ENCODE measurements at regions of chr6 and their contacts with region 1.

Region 1: GRCh38 chr6:144482142-144482541 is 197.0 kb downstream of the UTRN start:
- DNase-seq: peak; percentile 84 to 86
- H3K4me3 ChIP-seq: no peak overlapping the region
- H3K27ac ChIP-seq: peak overlapping the region; percentile 26 to 54 (median 32)
- H3K4me1 ChIP-seq: peaks cover 37 to 47% of the 10 kb centered on the region in 2 donors
- H3K27me3 ChIP-seq: no peaks in the 10 kb centered on the region
- CTCF ChIP-seq: peak; percentile 12 to 70 (median 62)
- POLR2A ChIP-seq: no peak

Region 2: GRCh38 chr6:144104898-144105487 is 377.1 kb before region 1 on chr6:
- intact Hi-C with region 1: loop called (anchors 10 kb)
- DNase-seq: peak; percentile 9 to 17
- H3K4me3 ChIP-seq: no peak overlapping the region
- H3K27ac ChIP-seq: peak overlapping the region; percentile 82 to 94 (median 83)
- H3K4me1 ChIP-seq: peaks cover 27 to 34% of the 10 kb centered on the region in 2 donors
- H3K27me3 ChIP-seq: no peaks in the 10 kb centered on the region
- CTCF ChIP-seq: peak in 5 of 6 experiments; percentile 57 to 96 (median 69)
- POLR2A ChIP-seq: no peak

Region 3: DNA sequence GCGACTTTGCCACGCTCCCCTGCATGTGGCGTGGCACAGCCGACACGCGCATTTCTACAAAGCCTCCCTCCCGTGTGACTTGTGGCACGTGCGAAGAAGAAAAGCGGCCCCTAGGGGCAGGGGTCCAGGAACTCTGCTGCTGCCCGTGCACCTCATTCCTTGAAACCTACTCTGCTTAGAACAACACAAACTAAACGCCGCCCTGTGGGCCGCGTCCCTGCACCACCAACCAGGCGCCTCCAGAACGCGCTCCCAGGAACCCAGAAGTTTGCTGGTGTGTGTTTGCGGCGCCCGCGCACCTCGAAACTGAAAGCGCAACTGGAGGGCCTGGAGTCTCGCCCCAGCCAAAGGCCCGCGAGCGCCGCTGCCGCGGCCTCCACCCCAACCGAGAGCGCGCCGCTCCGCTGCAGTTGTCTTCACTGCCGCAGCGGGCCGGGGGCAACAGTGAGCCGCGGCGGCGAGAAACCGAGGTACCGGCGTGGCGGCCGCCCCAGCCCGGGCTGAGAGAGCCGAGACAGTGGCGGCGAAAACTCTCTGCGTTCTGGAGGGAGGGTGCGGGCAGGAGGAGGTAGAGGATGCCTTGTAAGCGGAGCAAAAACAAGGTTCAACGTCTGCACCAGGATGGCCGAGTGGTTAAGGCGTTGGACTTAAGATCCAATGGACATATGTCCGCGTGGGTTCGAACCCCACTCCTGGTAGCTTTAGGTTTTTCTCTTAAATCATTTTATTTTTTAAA is 266.0 kb before region 1 on chr6:
- intact Hi-C with region 1: loop called (anchors 5 kb)
- DNase-seq: peak; percentile 94 to 96
- H3K4me3 ChIP-seq: peak overlapping the region; percentile 33 to 50 (median 37)
- H3K27ac ChIP-seq: peak overlapping the region; percentile 95 to 100 (median 98)
- H3K4me1 ChIP-seq: peaks cover 35 to 37% of the 10 kb centered on the region in 2 donors
- H3K27me3 ChIP-seq: no peaks in the 10 kb centered on the region
- CTCF ChIP-seq: peak; percentile 55 to 83 (median 73)
- POLR2A ChIP-seq: peak in 1 of 2 donors; percentile 82

Region 4: DNA sequence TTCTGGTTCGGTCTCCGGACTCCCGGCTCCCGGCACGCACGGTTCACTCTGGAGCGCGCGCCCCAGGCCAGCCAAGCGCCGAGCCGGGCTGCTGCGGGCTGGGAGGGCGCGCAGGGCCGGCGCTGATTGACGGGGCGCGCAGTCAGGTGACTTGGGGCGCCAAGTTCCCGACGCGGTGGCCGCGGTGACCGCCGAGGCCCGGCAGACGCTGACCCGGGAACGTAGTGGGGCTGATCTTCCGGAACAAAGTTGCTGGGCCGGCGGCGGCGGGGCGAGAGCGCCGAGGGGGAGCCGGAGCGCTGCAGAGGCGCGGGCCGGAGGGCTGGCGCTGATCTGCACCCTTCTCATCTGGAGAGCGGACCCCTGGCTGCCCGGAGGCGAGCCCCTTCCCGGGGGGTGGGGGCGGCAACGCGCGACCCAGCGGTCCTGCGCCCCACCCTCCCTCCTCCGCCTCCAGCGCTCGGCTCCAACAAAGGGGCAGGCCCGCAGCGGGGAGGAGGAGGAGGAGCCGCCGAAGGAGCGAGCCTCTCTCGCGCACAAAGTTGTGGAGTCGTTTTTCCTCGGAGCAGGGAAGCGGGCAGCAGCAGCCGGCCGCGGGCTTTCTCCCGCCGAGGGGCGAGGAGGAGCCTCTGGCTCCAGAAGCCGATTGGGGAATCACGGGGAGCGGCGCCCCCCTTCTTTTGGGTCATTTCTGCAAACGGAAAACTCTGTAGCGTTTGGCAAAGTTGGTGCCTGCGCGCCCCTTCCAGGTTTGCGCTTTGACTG is 197.2 kb before region 1 on chr6 and contains the start of gene UTRN:
- intact Hi-C with region 1: loop called (anchors 10 kb)
- DNase-seq: peak; percentile 88
- H3K4me3 ChIP-seq: peak within 1 kb of the TSS; percentile 67 to 83 (median 70)
- H3K27ac ChIP-seq: peak within 1 kb of the TSS; percentile 88 to 99 (median 98)
- H3K4me1 ChIP-seq: peaks cover 10 to 15% of the 10 kb centered on the region in 2 donors
- H3K27me3 ChIP-seq: no peaks in the 10 kb centered on the region
- CTCF ChIP-seq: peak in 1 of 6 experiments; percentile 13
- POLR2A ChIP-seq: peak; percentile 18 to 86
- total RNA-seq, gene UTRN: 383 to 473 (median 415) TPM

Region 5: GRCh38 chr6:144295211-144295610 is 186.9 kb before region 1 on chr6:
- intact Hi-C with region 1: no loop called
- DNase-seq: no peak
- H3K4me3 ChIP-seq: no peak overlapping the region
- H3K27ac ChIP-seq: peak overlapping the region in 2 of 3 donors; percentile 77 to 87
- H3K4me1 ChIP-seq: peaks cover 35 to 36% of the 10 kb centered on the region in 2 donors
- H3K27me3 ChIP-seq: no peaks in the 10 kb centered on the region
- CTCF ChIP-seq: no peak
- POLR2A ChIP-seq: no peak

Region 6: DNA sequence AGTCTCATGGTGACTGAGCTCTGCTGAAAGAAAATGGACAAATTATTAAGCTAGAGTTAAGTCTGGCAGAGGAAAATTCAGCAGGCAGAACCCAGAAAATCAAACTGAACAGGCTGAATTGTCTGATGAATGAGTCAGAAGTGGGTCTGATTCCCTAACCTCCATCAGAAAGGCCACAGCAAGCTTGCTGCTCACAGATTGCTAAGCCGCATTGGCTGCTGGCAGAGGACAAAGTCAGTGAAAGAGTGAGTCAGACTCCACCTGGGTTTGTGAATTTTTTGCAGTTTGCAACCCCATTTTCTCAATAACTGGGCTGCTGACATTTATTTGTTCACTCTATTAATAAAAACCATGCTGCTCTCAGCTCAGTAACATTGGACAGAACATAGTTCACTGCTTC is 1061.9 kb after region 1 on chr6:
- intact Hi-C with region 1: no loop called
- DNase-seq: no peak
- H3K4me3 ChIP-seq: no peak overlapping the region
- H3K27ac ChIP-seq: no peak overlapping the region
- H3K4me1 ChIP-seq: no peaks in the 10 kb centered on the region
- H3K27me3 ChIP-seq: no peaks in the 10 kb centered on the region
- CTCF ChIP-seq: no peak
- POLR2A ChIP-seq: no peak